IMR-90 (cell line): ENCODE measurements at regions of chr19 and their contacts with region 1.

Region 1: GRCh38 chr19:1794424-1795172 is 17.5 kb downstream of the ATP8B3 start:
- DNase-seq: no peak
- ATAC-seq: no peak
- H3K4me3 ChIP-seq: no peak overlapping the region
- H3K27ac ChIP-seq: no peak overlapping the region
- H3K4me1 ChIP-seq: no peaks in the 10 kb centered on the region
- H3K27me3 ChIP-seq: no peaks in the 10 kb centered on the region; the same call in 1 of the 2 replicates
- CTCF ChIP-seq: no peak
- POLR2A ChIP-seq: no peak
- RAD21 ChIP-seq: no peak

Region 2: DNA sequence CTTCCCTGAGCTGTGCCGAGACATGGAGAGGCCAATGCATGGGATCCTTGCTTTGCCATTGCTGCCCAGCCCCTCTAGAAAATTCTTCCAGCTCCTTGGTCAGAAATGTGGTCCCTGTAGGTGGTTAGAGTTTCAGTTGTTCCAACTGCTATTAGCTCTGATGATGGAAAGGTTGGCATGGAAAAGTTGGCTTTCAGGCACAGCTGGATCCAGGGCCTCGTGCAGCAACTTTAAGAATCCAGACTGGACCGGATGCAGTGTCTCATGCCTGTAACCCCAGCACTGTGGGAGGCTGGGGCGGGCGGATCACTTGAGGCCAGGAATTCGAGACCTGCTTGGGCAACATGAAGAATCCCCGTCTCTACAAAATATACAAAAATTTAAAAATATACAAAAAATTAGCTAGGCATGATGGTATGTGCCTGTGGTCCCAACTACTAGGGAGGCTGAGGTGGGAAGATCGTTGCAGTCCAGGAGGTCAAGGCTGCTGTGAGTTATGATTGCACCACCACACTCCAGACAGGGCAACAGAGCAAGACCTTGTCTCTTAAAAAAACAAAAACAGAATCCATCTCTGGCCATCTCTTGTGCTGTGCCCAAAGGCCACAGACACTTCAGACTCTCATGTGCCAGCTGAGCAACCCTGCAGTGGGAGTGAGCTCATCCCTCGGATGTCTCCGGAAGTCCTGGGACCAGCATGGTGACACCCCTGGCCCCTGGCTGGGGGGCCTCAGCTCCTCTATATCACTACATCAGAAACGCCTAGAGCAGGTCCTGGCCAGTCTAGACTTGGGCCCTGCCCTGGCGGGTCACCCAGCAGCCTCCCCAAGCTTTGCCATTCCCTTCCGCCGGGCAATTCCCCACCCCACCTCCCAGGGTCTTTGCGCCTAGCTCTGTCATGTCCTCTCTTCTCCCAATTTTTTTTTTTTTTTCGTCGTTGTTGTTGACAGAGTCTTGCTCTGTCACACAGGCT is 243.2 kb before region 1 on chr19:
- CTCF ChIA-PET with region 1: interaction called, 3 read pairs
- POLR2A ChIA-PET with region 1: no interaction called
- dilution Hi-C with region 1: no loop called
- in situ Hi-C with region 1: loop called (anchors 25 kb)
- intact Hi-C with region 1: loop called (anchors 5 kb)
- DNase-seq: no peak
- ATAC-seq: no peak; the same call in 1 of the 2 replicates
- H3K4me3 ChIP-seq: no peak overlapping the region
- H3K27ac ChIP-seq: no peak overlapping the region
- H3K4me1 ChIP-seq: no peaks in the 10 kb centered on the region
- H3K27me3 ChIP-seq: no peaks in the 10 kb centered on the region
- CTCF ChIP-seq: no peak
- POLR2A ChIP-seq: no peak
- RAD21 ChIP-seq: no peak

Region 3: GRCh38 chr19:1913781-1914577 is 119.4 kb after region 1 on chr19:
- CTCF ChIA-PET with region 1: no interaction called
- POLR2A ChIA-PET with region 1: no interaction called
- dilution Hi-C with region 1: no loop called
- in situ Hi-C with region 1: no loop called
- intact Hi-C with region 1: no loop called
- DNase-seq: no peak
- ATAC-seq: no peak
- H3K4me3 ChIP-seq: no peak overlapping the region
- H3K27ac ChIP-seq: no peak overlapping the region
- H3K4me1 ChIP-seq: peaks cover 7% of the 10 kb centered on the region
- H3K27me3 ChIP-seq: no peaks in the 10 kb centered on the region
- CTCF ChIP-seq: no peak
- POLR2A ChIP-seq: no peak
- RAD21 ChIP-seq: no peak